ENCODE measurements at regions of chr4 and their contacts with region 1.

Region 1: DNA sequence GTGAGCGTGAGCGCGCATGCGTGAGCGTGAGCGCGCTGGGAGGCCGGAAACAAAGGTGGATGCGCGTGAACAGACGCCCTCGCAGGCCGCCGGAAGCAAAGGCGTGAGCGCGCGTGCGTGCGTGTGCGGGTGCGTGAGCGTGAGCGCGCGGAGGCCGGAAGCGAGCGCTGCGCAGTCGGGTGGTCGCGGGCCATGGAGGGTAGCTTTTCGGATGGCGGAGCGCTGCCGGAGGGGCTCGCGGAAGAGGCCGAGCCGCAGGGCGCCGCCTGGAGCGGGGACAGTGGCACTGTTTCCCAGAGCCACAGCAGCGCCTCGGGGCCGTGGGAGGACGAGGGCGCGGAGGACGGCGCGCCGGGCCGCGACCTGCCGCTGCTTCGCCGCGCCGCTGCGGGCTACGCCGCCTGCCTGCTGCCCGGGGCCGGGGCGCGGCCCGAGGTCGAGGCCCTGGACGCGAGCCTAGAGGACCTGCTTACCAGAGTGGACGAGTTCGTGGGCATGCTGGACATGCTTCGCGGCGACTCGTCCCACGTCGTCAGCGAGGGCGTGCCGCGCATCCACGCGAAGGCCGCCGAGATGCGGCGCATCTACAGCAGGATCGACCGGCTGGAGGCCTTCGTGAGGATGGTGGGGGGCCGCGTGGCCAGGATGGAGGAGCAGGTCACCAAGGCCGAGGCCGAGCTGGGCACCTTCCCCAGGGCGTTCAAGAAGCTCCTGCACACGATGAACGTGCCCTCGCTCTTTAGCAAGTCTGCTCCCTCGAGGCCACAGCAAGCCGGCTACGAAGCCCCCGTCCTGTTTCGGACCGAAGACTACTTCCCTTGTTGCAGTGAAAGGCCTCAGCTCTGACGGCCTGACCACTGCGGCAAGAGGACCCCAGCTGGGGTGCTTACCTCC is at the start of gene BLOC1S4:
- DNase-seq: peak; percentile 75
- H3K4me3 Mint-ChIP-seq: peak within 1 kb of the TSS; percentile 91
- H3K27ac Mint-ChIP-seq: peak within 1 kb of the TSS; percentile 53
- H3K4me1 Mint-ChIP-seq: peaks cover 8% of the 10 kb centered on the region
- H3K27me3 Mint-ChIP-seq: no peaks in the 10 kb centered on the region
- CTCF ChIP-seq: no peak
- total RNA-seq, gene BLOC1S4: 9.2 and 13.2 TPM in 2 replicates

Region 2: GRCh38 chr4:6640292-6641163 is 75.7 kb before region 1 on chr4 and contains the start of gene MRFAP1:
- CTCF ChIA-PET with region 1: no interaction called
- intact Hi-C with region 1: no loop called
- DNase-seq: peak; percentile 88
- H3K4me3 Mint-ChIP-seq: peak within 1 kb of the TSS; percentile 98
- H3K27ac Mint-ChIP-seq: peak within 1 kb of the TSS; percentile 95
- H3K4me1 Mint-ChIP-seq: peaks cover 12% of the 10 kb centered on the region
- H3K27me3 Mint-ChIP-seq: peaks cover under 1% of the 10 kb centered on the region
- CTCF ChIP-seq: no peak
- total RNA-seq, gene MRFAP1: 151 and 154 TPM in 2 replicates

Region 3: GRCh38 chr4:6806924-6807636 is 90.8 kb after region 1 on chr4:
- CTCF ChIA-PET with region 1: no interaction called
- intact Hi-C with region 1: loop called (anchors 10 kb)
- DNase-seq: no peak
- H3K4me3 Mint-ChIP-seq: no peak overlapping the region
- H3K27ac Mint-ChIP-seq: no peak overlapping the region
- H3K4me1 Mint-ChIP-seq: no peaks in the 10 kb centered on the region
- H3K27me3 Mint-ChIP-seq: no peaks in the 10 kb centered on the region
- CTCF ChIP-seq: no peak

Region 4: GRCh38 chr4:6824071-6824470 is 107.8 kb after region 1 on chr4:
- CTCF ChIA-PET with region 1: no interaction called
- intact Hi-C with region 1: no loop called
- DNase-seq: no peak
- H3K4me3 Mint-ChIP-seq: no peak overlapping the region
- H3K27ac Mint-ChIP-seq: no peak overlapping the region
- H3K4me1 Mint-ChIP-seq: no peaks in the 10 kb centered on the region
- H3K27me3 Mint-ChIP-seq: no peaks in the 10 kb centered on the region
- CTCF ChIP-seq: no peak

Region 5: GRCh38 chr4:6873792-6874461 is 157.7 kb after region 1 on chr4:
- CTCF ChIA-PET with region 1: interaction called, 20 read pairs
- intact Hi-C with region 1: loop called (anchors 1 kb)
- DNase-seq: peak; percentile 64
- H3K4me3 Mint-ChIP-seq: no peak overlapping the region
- H3K27ac Mint-ChIP-seq: no peak overlapping the region
- H3K4me1 Mint-ChIP-seq: no peaks in the 10 kb centered on the region
- H3K27me3 Mint-ChIP-seq: no peaks in the 10 kb centered on the region
- CTCF ChIP-seq: peak; percentile 65

Region 6: DNA sequence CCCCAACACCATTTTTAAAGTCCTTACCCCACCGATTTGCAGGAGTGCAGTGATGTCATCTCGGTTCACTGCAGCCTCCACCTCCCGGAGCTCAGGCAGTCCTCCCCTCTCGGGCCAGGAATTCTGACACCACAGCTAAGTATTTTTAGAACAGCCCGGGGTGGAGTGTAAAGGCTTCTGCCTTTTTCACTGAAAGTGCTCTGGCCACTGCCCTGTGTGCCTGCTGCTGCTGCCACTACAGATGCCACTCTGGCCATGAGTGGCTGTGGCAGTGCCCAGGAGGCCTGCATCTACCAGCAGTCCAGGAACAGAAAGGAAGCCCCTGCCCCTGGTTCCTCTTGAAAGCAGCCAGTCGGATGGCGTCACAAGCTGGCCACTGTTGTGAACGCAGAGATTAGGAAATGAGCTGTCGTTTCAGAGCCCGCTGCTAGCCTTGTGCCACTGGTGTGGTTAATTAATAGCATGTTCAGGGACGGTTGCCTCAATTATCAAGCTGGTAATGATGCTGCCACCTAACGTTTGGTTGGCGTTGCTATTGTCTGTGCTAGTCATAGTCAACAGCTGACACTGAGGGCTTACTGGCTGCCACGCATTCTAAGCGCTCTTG is 169.8 kb after region 1 on chr4:
- CTCF ChIA-PET with region 1: interaction called, 5 read pairs
- intact Hi-C with region 1: loop called (anchors 5 kb)
- DNase-seq: peak; percentile 60
- H3K4me3 Mint-ChIP-seq: peak overlapping the region; percentile 34
- H3K27ac Mint-ChIP-seq: no peak overlapping the region
- H3K4me1 Mint-ChIP-seq: peaks cover 7% of the 10 kb centered on the region
- H3K27me3 Mint-ChIP-seq: no peaks in the 10 kb centered on the region
- CTCF ChIP-seq: no peak

Region 7: DNA sequence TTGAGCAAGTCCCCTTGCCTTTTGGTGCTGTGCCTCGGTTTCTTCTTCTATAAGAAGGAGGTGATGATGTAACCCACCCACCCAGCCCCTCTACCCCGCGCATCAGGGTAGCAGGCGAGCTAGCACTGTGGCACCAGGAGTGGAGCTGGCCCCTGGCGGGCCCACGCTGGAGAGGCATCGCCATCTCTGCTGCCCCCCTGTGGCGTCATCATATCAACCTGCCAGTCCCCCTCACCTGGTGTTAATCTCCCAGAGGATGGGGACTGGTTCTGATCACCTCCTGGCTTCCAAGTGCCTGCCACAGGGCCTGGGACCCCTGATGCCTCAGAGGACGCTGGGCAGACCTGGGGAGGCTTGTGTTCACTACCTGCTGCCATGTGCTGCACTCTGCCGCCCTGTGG is 469.8 kb after region 1 on chr4:
- CTCF ChIA-PET with region 1: no interaction called
- intact Hi-C with region 1: loop called (anchors 5 kb)
- DNase-seq: peak; percentile 54
- H3K4me3 Mint-ChIP-seq: no peak overlapping the region
- H3K27ac Mint-ChIP-seq: no peak overlapping the region
- H3K4me1 Mint-ChIP-seq: no peaks in the 10 kb centered on the region
- H3K27me3 Mint-ChIP-seq: peaks cover 87% of the 10 kb centered on the region
- CTCF ChIP-seq: peak; percentile 37